Gastrocnemius medialis (tissue), 4 donors: ENCODE measurements at regions of chr3 and their contacts with region 1.

Region 1: GRCh38 chr3:192566706-192567290 is 160.5 kb downstream of the FGF12 start:
- DNase-seq: peak; percentile 25 to 29
- ATAC-seq: peak; percentile 57 to 72
- H3K4me3 ChIP-seq: no peak overlapping the region
- H3K27ac ChIP-seq: no peak overlapping the region
- H3K4me1 ChIP-seq: no peaks in the 10 kb centered on the region
- H3K27me3 ChIP-seq: no peaks in the 10 kb centered on the region
- CTCF ChIP-seq: peak; percentile 40 to 83 (median 59)
- POLR2A ChIP-seq: no peak

Region 2: GRCh38 chr3:190972840-190973270 is 1593.9 kb before region 1 on chr3:
- in situ Hi-C with region 1: no loop called
- intact Hi-C with region 1: no loop called
- DNase-seq: no peak
- ATAC-seq: no peak
- H3K4me3 ChIP-seq: no peak overlapping the region
- H3K27ac ChIP-seq: no peak overlapping the region
- H3K4me1 ChIP-seq: no peaks in the 10 kb centered on the region
- H3K27me3 ChIP-seq: no peaks in the 10 kb centered on the region
- CTCF ChIP-seq: no peak
- POLR2A ChIP-seq: no peak

Region 3: DNA sequence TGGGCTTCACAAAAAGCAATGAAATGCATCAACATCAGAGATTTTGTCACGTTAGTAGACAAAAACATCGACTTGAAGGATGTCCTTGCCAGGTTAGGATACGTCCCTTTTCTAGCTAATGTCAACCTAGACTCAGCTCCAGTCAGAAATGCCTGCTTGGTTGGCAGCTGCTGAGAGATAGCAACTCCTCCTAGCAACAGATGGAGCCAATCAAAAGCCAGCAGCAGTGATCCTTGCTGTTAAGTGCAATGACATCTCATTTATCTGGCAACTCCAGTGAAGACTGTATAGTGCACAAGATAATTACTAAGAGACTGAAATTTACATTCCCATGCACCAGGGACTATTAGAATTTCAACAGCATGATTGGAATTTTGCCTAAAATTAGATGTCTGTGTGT is 263.6 kb before region 1 on chr3:
- in situ Hi-C with region 1: no loop called
- intact Hi-C with region 1: no loop called
- DNase-seq: no peak
- ATAC-seq: no peak
- H3K4me3 ChIP-seq: no peak overlapping the region
- H3K27ac ChIP-seq: no peak overlapping the region
- H3K4me1 ChIP-seq: no peaks in the 10 kb centered on the region
- H3K27me3 ChIP-seq: no peaks in the 10 kb centered on the region
- CTCF ChIP-seq: no peak
- POLR2A ChIP-seq: no peak

Region 4: GRCh38 chr3:192802957-192803899 is 236.4 kb after region 1 on chr3:
- in situ Hi-C with region 1: loop called in 3 of 4 experiments (anchors 5 to 10 kb)
- intact Hi-C with region 1: loop called (anchors 1 kb)
- DNase-seq: no peak
- ATAC-seq: no peak
- H3K4me3 ChIP-seq: no peak overlapping the region
- H3K27ac ChIP-seq: no peak overlapping the region
- H3K4me1 ChIP-seq: peaks cover 0 to 3% of the 10 kb centered on the region in 2 donors
- H3K27me3 ChIP-seq: no peaks in the 10 kb centered on the region
- CTCF ChIP-seq: peak in 4 of 5 experiments; percentile 21 to 44 (median 36)
- POLR2A ChIP-seq: no peak

Region 5: GRCh38 chr3:193040836-193041672 is 474.3 kb after region 1 on chr3:
- in situ Hi-C with region 1: loop called in 1 of 4 experiments (anchors 10 kb)
- intact Hi-C with region 1: loop called (anchors 5 kb)
- DNase-seq: no peak
- ATAC-seq: no peak
- H3K4me3 ChIP-seq: no peak overlapping the region
- H3K27ac ChIP-seq: no peak overlapping the region
- H3K4me1 ChIP-seq: no peaks in the 10 kb centered on the region
- H3K27me3 ChIP-seq: no peaks in the 10 kb centered on the region
- CTCF ChIP-seq: peak; percentile 33 to 66 (median 55)
- POLR2A ChIP-seq: no peak